Mammary epithelial cell (primary cell): ENCODE measurements at regions of chr4 and their contacts with region 1.

Region 1: GRCh38 chr4:150209140-150209829 is 131.0 kb downstream of the DCLK2 start:
- DNase-seq: peak; percentile 37
- H3K4me3 ChIP-seq: no peak overlapping the region
- H3K27ac ChIP-seq: no peak overlapping the region
- H3K4me1 ChIP-seq: peaks cover 21% of the 10 kb centered on the region
- H3K27me3 ChIP-seq: no peaks in the 10 kb centered on the region
- CTCF ChIP-seq: peak; percentile 61

Region 2: DNA sequence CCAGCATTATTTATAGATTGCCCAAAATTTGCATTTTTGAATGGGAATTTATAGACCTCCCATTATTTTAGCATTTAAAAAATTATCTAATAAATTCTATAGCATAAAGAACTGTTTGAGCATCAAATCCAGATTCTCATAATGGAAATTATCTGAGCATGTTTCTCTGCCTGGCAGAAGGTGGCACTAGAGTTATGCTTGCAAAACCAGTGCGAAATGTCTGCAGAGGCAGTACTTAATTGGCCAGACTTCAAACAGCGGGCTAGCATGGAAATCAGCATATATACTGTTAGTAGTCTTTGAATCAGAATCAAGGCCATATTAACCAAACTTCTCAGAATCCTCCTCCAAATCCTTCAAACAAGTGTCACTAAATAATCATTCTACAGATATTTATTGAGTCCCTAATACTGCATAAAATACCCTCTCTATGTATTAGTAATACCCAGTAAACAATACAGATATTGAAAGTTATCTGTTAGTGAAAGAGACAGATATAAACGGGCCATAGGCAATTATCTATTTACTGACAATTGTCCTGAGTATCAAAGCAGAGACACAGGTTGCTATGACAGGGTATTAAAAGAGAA is 209.7 kb before region 1 on chr4:
- CTCF ChIA-PET with region 1: no interaction called
- dilution Hi-C with region 1: no loop called
- in situ Hi-C with region 1: loop called in 1 of 2 experiments (anchors 10 kb)
- intact Hi-C with region 1: loop called (anchors 1 kb)
- DNase-seq: peak; percentile 36
- H3K4me3 ChIP-seq: no peak overlapping the region
- H3K27ac ChIP-seq: no peak overlapping the region
- H3K4me1 ChIP-seq: peaks cover 13% of the 10 kb centered on the region
- H3K27me3 ChIP-seq: no peaks in the 10 kb centered on the region
- CTCF ChIP-seq: peak; percentile 59 to 74

Region 3: DNA sequence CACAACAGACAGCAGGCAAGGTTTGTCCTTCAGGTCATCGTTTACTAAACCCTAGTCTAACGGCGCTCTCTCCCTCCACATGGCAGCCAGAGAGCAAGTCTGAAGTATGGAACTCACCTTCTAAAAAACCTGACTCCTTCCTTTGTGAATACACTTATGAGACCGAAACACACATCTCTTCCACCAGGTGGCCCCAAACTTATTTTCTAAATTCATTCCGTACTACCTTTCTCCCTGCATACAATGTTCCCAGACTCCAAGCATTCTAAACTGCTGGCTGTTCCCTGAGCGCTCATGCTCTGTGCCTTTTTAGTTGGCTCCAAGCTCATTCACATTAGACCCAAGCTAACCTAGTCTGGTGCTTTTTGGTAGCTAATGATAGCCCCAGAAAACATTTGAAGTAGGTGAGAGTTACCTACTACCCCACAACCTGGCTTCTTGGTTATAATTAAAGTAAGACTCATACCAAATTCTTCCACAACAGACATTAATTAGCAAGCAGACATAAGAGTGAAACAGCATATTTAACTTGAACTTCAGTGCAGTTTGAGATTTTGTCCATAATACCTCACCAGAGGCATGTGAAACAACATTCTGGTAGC is 198.7 kb before region 1 on chr4:
- CTCF ChIA-PET with region 1: interaction called, 4 read pairs
- dilution Hi-C with region 1: no loop called
- in situ Hi-C with region 1: loop called in 1 of 2 experiments (anchors 10 kb)
- intact Hi-C with region 1: loop called (anchors 1 kb)
- DNase-seq: peak; percentile 52
- H3K4me3 ChIP-seq: no peak overlapping the region
- H3K27ac ChIP-seq: no peak overlapping the region
- H3K4me1 ChIP-seq: no peaks in the 10 kb centered on the region
- H3K27me3 ChIP-seq: no peaks in the 10 kb centered on the region
- CTCF ChIP-seq: peak; percentile 44 to 61

Region 4: DNA sequence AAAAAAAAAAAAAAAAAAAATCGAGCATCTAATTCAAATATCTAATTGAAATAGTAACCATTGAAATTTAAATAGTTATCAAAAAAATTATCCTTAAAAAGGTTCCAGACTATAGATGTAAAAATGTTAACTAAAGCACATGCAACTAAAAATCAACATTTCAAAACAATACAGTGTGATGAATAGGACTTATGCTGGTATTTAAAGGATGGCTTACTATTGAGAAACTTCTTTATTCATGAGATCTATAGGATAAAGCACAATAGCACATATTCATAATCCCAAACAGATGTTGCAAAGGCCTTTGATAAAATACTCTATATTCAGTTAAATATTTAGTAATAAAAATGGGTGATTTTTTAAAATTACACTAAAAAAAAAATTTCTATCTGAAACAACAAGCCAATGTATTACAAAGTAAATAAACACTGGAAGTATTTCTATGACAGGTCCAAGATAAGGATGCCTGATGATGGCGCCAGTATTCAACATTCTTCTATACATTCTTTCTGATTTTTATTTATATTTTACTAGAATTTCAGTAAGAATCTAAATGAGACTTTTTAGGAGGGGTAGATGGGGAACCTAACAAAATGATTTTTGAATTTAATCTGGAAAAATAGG is 104.8 kb before region 1 on chr4:
- CTCF ChIA-PET with region 1: no interaction called
- dilution Hi-C with region 1: no loop called
- in situ Hi-C with region 1: no loop called
- intact Hi-C with region 1: loop called (anchors 1 kb)
- DNase-seq: no peak
- H3K4me3 ChIP-seq: no peak overlapping the region
- H3K27ac ChIP-seq: no peak overlapping the region
- H3K4me1 ChIP-seq: no peaks in the 10 kb centered on the region
- H3K27me3 ChIP-seq: peaks cover 3% of the 10 kb centered on the region
- CTCF ChIP-seq: peak; percentile 2 to 24